ENCODE measurements at regions of chr3 and their contacts with region 1.

Region 1: DNA sequence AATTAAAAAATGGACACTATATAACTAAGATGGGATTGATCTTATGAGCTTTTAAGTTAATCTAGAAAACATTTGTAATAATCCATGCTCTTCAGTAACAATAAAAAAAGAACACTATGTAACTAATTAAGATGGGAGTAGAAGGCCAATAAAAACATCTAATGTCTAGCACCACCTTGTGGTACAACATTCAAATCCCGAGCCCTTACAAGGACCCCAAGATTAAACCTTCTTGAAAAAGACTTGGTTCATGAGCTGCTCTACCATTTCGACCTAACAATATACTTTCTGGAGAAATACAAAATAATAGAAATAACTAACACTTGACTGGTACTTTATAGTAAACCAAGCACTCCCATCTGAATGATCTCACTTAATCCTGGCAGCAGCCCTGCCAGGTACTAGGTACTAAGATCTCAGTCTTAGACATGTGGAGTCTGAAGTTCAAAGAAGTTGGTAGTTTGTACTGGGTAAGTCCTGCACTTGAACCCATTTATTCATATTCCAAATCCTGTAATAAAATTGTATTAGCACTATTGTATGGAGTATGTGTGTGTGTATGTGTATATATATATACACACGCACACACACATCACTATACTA is 21.8 kb downstream of the METTL6 start:
- DNase-seq: no peak
- H3K4me3 Mint-ChIP-seq: no peak overlapping the region
- H3K27ac Mint-ChIP-seq: no peak overlapping the region
- H3K4me1 Mint-ChIP-seq: peaks cover 6% of the 10 kb centered on the region
- H3K27me3 Mint-ChIP-seq: no peaks in the 10 kb centered on the region

Region 2: GRCh38 chr3:15108082-15108545 is 297.4 kb before region 1 on chr3:
- intact Hi-C with region 1: loop called (anchors 1 kb)
- DNase-seq: peak; percentile 55
- H3K4me3 Mint-ChIP-seq: no peak overlapping the region
- H3K27ac Mint-ChIP-seq: no peak overlapping the region
- H3K4me1 Mint-ChIP-seq: peaks cover 4% of the 10 kb centered on the region
- H3K27me3 Mint-ChIP-seq: peaks cover 11% of the 10 kb centered on the region